Endothelial cell of umbilical vein (primary cell): ENCODE measurements at regions of chr19 and their contacts with region 1.

Region 1: DNA sequence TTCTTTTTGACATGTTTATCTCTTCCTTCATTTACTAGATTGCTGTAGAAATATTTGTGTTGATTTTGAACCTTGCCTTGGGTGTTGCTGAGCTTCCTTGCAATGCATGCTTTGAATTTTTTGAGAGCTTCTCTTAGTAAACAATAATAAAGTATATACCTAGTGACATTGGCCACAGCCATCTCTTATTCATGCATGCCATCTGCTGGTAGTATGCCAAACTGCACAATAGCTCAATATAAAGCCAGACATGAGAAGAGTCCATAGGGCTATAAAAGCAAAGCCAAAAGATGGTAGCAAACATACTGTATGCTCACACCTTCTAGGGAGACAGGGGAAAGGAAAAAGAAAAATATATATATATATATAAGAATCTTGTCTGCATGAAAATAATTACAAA is 18.9 kb upstream of the ZSCAN5A start:
- DNase-seq: peak; percentile 69
- H3K4me3 ChIP-seq: no peak overlapping the region
- H3K27ac ChIP-seq: no peak overlapping the region
- H3K4me1 ChIP-seq: no peaks in the 10 kb centered on the region
- H3K27me3 ChIP-seq: peaks cover 0 to 1% of the 10 kb centered on the region in 2 experiments
- CTCF ChIP-seq: peak; percentile 48 to 66
- POLR2A ChIP-seq: no peak

Region 2: GRCh38 chr19:55703790-55704215 is 629.7 kb before region 1 on chr19:
- CTCF ChIA-PET with region 1: interaction called, 8 read pairs
- POLR2A ChIA-PET with region 1: no interaction called
- dilution Hi-C with region 1: no loop called
- intact Hi-C with region 1: loop called (anchors 10 kb)
- DNase-seq: peak; percentile 15
- H3K4me3 ChIP-seq: no peak overlapping the region
- H3K27ac ChIP-seq: no peak overlapping the region
- H3K4me1 ChIP-seq: no peaks in the 10 kb centered on the region
- H3K27me3 ChIP-seq: peaks cover 0 to 2% of the 10 kb centered on the region in 2 experiments
- CTCF ChIP-seq: peak; percentile 74 to 76
- POLR2A ChIP-seq: no peak

Region 3: DNA sequence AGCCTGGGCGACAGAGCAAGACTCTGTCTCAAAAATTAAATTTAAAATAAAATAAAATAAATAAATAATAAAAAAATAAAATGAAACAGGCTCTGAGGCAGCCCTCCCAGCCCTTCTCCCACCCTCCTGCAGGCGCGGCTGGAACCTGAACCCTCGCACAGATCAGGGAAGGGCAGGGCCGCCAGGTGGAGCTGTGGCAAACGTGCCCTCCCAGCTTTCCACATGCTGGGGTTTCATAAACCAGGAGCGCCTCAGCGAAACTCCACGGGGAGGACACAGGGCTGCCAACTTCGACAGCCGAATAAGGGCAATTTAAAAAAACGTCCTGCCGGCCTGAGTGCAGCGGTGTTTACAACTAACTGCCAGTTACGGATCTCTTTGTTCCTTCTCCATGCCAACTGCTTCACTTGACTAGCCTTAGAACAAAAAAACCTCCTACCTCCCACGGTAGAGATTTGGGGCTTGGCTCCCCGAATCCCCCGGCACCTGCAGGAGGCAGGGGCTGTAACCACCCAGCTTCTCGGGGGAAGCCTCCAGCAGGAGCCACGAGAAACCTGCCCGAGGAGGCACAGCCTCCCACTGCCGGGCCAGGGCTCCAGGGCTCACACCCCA is 228.3 kb before region 1 on chr19:
- CTCF ChIA-PET with region 1: interaction called, 10 read pairs
- POLR2A ChIA-PET with region 1: no interaction called
- dilution Hi-C with region 1: no loop called
- intact Hi-C with region 1: no loop called
- DNase-seq: peak; percentile 54
- H3K4me3 ChIP-seq: no peak overlapping the region
- H3K27ac ChIP-seq: no peak overlapping the region
- H3K4me1 ChIP-seq: peaks cover 4% of the 10 kb centered on the region
- H3K27me3 ChIP-seq: no peaks in the 10 kb centered on the region
- CTCF ChIP-seq: peak; percentile 41 to 68
- POLR2A ChIP-seq: no peak

Region 4: GRCh38 chr19:56252699-56253422 is 80.6 kb before region 1 on chr19:
- CTCF ChIA-PET with region 1: interaction called, 761 read pairs
- POLR2A ChIA-PET with region 1: interaction called, 5 read pairs
- dilution Hi-C with region 1: no loop called
- intact Hi-C with region 1: loop called (anchors 1 kb)
- DNase-seq: peak; percentile 70
- H3K4me3 ChIP-seq: no peak overlapping the region
- H3K27ac ChIP-seq: no peak overlapping the region
- H3K4me1 ChIP-seq: no peaks in the 10 kb centered on the region
- H3K27me3 ChIP-seq: no peaks in the 10 kb centered on the region
- CTCF ChIP-seq: peak; percentile 88 to 94
- POLR2A ChIP-seq: no peak

Region 5: GRCh38 chr19:56301182-56301581 is 32.3 kb before region 1 on chr19:
- CTCF ChIA-PET with region 1: interaction called, 14 read pairs
- POLR2A ChIA-PET with region 1: no interaction called
- dilution Hi-C with region 1: no loop called
- intact Hi-C with region 1: no loop called
- DNase-seq: peak; percentile 37
- H3K4me3 ChIP-seq: no peak overlapping the region
- H3K27ac ChIP-seq: peak overlapping the region; percentile 35
- H3K4me1 ChIP-seq: peaks cover 15% of the 10 kb centered on the region
- H3K27me3 ChIP-seq: no peaks in the 10 kb centered on the region
- CTCF ChIP-seq: peak; percentile 13 to 28
- POLR2A ChIP-seq: no peak

Region 6: GRCh38 chr19:56350416-56351045 is 17.0 kb after region 1 on chr19:
- CTCF ChIA-PET with region 1: interaction called, 44 read pairs
- POLR2A ChIA-PET with region 1: no interaction called
- dilution Hi-C with region 1: no loop called
- intact Hi-C with region 1: no loop called
- DNase-seq: peak; percentile 55
- H3K4me3 ChIP-seq: no peak overlapping the region
- H3K27ac ChIP-seq: no peak overlapping the region
- H3K4me1 ChIP-seq: no peaks in the 10 kb centered on the region
- H3K27me3 ChIP-seq: no peaks in the 10 kb centered on the region
- CTCF ChIP-seq: peak; percentile 56 to 75
- POLR2A ChIP-seq: no peak